Left cardiac atrium (tissue), 4 donors: ENCODE measurements at regions of chr12 and their contacts with region 1.

Region 1: GRCh38 chr12:102294568-102295235 is 97.1 kb upstream of the PMCH start:
- DNase-seq: no peak
- ATAC-seq: no peak

Region 2: DNA sequence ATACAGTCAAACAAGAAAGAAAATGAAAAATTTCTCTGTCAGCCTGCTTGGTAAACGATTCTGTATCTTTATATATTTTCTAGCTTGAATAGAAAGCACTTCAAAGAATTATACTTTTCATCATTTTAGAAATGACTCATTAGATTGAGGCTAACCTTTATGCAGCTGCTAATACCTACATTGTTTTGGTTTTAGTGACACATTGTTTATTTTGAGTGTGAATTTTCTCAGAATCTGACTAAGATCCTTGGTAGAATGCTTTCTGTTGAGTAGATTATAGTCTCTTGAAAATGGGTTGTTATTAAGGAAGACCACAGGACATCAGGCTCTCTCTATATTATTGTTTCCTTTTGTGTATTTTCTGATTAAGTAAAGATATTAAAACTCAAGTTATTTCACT is 96.9 kb before region 1 on chr12 and contains the start of gene PMCH:
- intact Hi-C with region 1: no loop called
- DNase-seq: no peak
- ATAC-seq: no peak
- total RNA-seq, gene PMCH: not detected

Region 3: DNA sequence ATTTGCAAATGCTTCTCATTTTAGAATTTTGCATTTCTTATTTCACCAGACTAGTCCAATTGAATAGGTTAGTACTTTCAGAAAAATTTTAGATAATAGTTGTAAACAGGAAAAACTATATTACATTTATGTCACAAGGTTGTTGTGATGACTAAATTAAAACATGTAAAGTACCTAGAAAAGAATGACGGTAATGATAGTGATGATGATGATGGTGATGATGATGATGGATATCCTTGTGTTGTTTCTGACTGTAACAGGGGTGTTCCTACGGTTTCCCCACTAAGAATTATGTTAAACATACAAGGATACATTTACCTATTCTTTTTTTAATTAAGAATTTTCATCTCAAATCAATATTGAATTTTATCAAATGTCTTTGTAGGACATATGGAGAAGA is 48.7 kb before region 1 on chr12:
- intact Hi-C with region 1: no loop called
- DNase-seq: no peak
- ATAC-seq: no peak

Region 4: GRCh38 chr12:102369876-102370275 is 75.2 kb after region 1 on chr12:
- intact Hi-C with region 1: loop called in 1 of 2 experiments (anchors 2 kb)
- DNase-seq: no peak
- ATAC-seq: no peak